ENCODE measurements at regions of chr1 and their contacts with region 1.

Region 1: DNA sequence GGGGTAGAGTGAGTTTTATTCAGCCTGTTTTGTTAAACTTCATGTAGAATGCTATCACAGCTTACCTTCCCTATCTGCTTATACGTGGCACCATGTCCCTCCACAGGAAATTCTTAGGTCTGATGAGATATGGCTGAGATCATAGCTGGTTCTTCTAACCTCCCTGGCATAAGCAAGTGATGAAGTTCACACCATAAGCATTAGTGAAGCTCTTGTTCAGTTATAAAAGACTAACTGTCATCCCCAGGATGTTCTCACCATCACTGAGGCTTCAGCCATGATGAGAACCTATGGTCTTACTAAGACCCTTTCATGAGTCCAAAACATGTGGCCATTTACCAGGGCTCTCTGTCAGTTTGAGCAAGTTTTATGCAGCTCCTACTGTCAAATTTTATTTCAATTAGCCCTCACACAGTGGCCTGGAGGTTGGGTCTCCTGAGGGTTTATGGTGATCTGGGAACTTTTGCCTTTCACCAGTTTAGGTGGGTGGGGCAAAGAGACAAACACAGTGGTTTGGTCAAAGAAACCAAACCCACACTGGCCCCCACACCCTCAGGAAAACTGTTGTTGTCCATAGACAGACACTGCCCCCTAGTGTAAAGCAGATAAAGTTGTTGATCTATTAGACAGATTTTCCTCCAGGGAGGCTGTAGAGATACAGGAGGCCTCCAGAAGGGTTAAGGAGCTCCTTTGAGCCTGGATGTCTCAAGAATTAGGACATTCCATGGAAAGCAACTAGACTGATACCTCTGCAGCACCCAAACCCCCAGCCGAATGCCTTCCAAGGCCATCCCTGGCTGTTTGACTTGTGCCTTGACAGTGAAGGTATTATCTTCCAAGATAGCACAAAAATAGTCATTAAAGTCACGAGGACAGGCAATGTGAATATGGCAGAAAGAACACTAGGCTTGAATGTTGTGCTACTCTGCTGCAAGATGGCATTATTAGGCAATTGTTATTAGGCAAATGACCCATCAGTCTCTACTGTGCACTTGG is 5.0 kb downstream of the SLC22A15 start:
- DNase-seq: peak in 1 of 9 donors; percentile 19
- ATAC-seq: peak; percentile 58
- H3K4me3 ChIP-seq: no peak overlapping the region
- H3K4me3 Mint-ChIP-seq: no peak overlapping the region
- H3K27ac ChIP-seq: no peak overlapping the region
- H3K27ac Mint-ChIP-seq: no peak overlapping the region
- H3K4me1 ChIP-seq: no peaks in the 10 kb centered on the region
- H3K4me1 Mint-ChIP-seq: peaks cover 0 to 11% (median 5%) of the 10 kb centered on the region in 7 donors
- H3K27me3 ChIP-seq: no peaks in the 10 kb centered on the region
- H3K27me3 Mint-ChIP-seq: peaks cover 18 to 51% (median 31%) of the 10 kb centered on the region in 5 donors

Region 2: DNA sequence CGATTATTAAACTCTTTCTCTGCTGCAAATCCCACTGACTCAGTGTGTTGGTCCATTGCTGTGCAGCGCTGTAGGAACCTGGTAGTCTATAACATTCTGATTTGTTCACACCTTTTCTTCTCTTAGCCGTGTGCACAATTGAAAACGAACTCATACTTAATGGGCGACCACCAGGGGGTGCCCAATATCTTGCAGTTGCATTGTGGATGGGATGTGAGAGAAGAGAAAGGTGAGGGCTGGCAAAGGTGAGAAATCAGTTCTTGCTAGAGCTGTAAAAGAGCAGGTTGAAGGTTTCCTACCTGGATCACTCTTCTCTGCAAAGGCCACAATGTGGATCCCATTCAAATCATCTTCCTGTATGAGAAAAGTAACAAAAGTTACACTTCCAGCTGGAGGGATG is 263.8 kb before region 1 on chr1:
- CTCF ChIA-PET with region 1: no interaction called
- POLR2A ChIA-PET with region 1: no interaction called
- intact Hi-C with region 1: loop called in 1 of 2 experiments (anchors 5 kb)
- DNase-seq: peak in 3 of 9 donors; percentile 7 to 14 (median 11)
- ATAC-seq: no peak
- H3K4me3 ChIP-seq: no peak overlapping the region
- H3K4me3 Mint-ChIP-seq: no peak overlapping the region
- H3K27ac ChIP-seq: no peak overlapping the region
- H3K27ac Mint-ChIP-seq: no peak overlapping the region
- H3K4me1 ChIP-seq: no peaks in the 10 kb centered on the region
- H3K4me1 Mint-ChIP-seq: no peaks in the 10 kb centered on the region
- H3K27me3 ChIP-seq: no peaks in the 10 kb centered on the region
- H3K27me3 Mint-ChIP-seq: peaks cover 0 to 18% (median 12%) of the 10 kb centered on the region in 5 donors

Region 3: DNA sequence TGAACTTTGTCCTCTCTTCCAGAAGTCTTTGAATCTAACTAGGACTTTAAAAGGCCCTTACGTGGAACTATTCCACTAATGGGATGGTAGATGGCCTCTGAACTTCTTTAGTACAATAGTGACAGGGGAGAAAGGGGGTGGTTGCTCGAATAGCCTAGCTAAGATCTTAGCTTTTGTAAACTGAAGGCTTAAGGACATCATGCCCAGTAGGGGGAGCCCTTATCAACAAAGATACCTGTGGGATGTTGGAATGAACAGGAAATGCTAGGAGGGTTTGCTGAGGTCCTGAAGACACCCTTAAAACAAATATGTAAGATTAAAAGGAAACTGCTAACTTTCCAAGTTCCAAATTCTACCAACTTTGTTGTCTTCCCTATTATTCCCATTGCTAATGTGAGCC is 173.6 kb before region 1 on chr1:
- CTCF ChIA-PET with region 1: interaction called, 3 read pairs
- POLR2A ChIA-PET with region 1: no interaction called
- intact Hi-C with region 1: loop called in 1 of 2 experiments (anchors 1 kb)
- DNase-seq: peak in 7 of 9 donors; percentile 8 to 41 (median 31)
- ATAC-seq: peak; percentile 72
- H3K4me3 ChIP-seq: no peak overlapping the region
- H3K4me3 Mint-ChIP-seq: no peak overlapping the region
- H3K27ac ChIP-seq: no peak overlapping the region
- H3K27ac Mint-ChIP-seq: no peak overlapping the region
- H3K4me1 ChIP-seq: no peaks in the 10 kb centered on the region
- H3K4me1 Mint-ChIP-seq: peaks cover 0 to 3% (median 0%) of the 10 kb centered on the region in 7 donors
- H3K27me3 ChIP-seq: peaks cover 0 to 5% of the 10 kb centered on the region in 2 donors
- H3K27me3 Mint-ChIP-seq: peaks cover 17 to 30% (median 25%) of the 10 kb centered on the region in 5 donors

Region 4: DNA sequence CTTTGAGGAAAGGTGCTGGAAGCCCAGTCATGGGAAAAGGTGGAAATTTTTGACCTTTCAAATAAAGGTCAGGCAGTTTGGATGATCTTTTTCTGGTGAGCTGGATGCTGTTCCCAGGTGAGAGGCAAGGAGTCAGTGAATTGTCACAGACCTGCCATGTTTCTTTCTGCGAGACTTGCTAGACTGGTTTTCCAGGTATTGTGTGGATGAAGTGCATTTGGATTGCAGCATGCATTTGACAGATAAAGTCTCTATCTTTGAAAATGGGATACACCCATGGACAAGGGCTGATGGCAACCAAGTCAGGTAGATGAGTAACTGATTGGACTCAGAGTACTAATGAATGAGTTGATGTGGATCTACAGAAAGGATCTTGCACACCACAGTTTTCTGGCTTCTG is 74.6 kb before region 1 on chr1:
- CTCF ChIA-PET with region 1: no interaction called
- POLR2A ChIA-PET with region 1: no interaction called
- intact Hi-C with region 1: no loop called
- DNase-seq: no peak
- ATAC-seq: no peak
- H3K4me3 ChIP-seq: no peak overlapping the region
- H3K4me3 Mint-ChIP-seq: no peak overlapping the region
- H3K27ac ChIP-seq: no peak overlapping the region
- H3K27ac Mint-ChIP-seq: no peak overlapping the region
- H3K4me1 ChIP-seq: no peaks in the 10 kb centered on the region
- H3K4me1 Mint-ChIP-seq: no peaks in the 10 kb centered on the region
- H3K27me3 ChIP-seq: no peaks in the 10 kb centered on the region
- H3K27me3 Mint-ChIP-seq: peaks cover 12 to 29% (median 18%) of the 10 kb centered on the region in 5 donors

Region 5: DNA sequence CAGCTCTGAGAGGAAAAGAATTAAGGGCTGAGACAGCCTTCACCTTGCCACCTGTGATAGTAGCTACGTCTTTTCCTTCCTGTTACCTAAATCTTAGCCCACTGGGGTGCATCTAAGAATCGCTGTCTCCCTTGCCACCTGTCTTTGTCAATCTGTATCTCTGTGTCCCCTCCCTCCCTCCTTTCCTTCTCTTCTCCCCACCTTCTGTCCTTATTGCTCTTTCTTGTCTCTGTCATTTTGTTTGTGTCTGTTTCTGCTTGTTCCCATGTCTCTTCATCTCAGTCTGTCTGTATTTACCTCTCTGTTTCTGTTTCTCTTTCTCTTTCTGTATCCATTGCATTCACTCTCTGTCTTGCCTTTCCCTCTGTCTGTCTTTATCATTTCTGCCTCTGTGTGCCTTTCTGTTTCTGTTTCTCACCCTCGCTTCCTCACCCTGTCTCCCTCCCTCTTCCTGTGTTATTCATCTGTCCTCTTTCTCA is 25.2 kb after region 1 on chr1:
- CTCF ChIA-PET with region 1: no interaction called
- POLR2A ChIA-PET with region 1: no interaction called
- intact Hi-C with region 1: loop called in 1 of 2 experiments (anchors 2 kb)
- DNase-seq: peak in 6 of 9 donors; percentile 1 to 34 (median 18)
- ATAC-seq: peak; percentile 77
- H3K4me3 ChIP-seq: peak overlapping the region; percentile 52
- H3K4me3 Mint-ChIP-seq: peak overlapping the region; percentile 30 to 90 (median 82)
- H3K27ac ChIP-seq: peak overlapping the region; percentile 52
- H3K27ac Mint-ChIP-seq: peak overlapping the region; percentile 59 to 91 (median 85)
- H3K4me1 ChIP-seq: peaks cover 9 to 11% of the 10 kb centered on the region in 2 donors
- H3K4me1 Mint-ChIP-seq: peaks cover 8 to 16% (median 12%) of the 10 kb centered on the region in 7 donors
- H3K27me3 ChIP-seq: no peaks in the 10 kb centered on the region
- H3K27me3 Mint-ChIP-seq: peaks cover 3 to 11% (median 9%) of the 10 kb centered on the region in 5 donors

Region 6: GRCh38 chr1:116115476-116116439 is 134.5 kb after region 1 on chr1:
- CTCF ChIA-PET with region 1: no interaction called
- POLR2A ChIA-PET with region 1: no interaction called
- intact Hi-C with region 1: no loop called
- DNase-seq: no peak
- ATAC-seq: no peak
- H3K4me3 ChIP-seq: no peak overlapping the region
- H3K4me3 Mint-ChIP-seq: no peak overlapping the region
- H3K27ac ChIP-seq: no peak overlapping the region
- H3K27ac Mint-ChIP-seq: no peak overlapping the region
- H3K4me1 ChIP-seq: no peaks in the 10 kb centered on the region
- H3K4me1 Mint-ChIP-seq: no peaks in the 10 kb centered on the region
- H3K27me3 ChIP-seq: no peaks in the 10 kb centered on the region
- H3K27me3 Mint-ChIP-seq: peaks cover 0 to 17% (median 6%) of the 10 kb centered on the region in 5 donors